ENCODE measurements at regions of chr4 and their contacts with region 1.

Region 1: GRCh38 chr4:140252742-140253555 is 99.0 kb upstream of the MAML3 start:
- DNase-seq: peak; percentile 89 to 94 (median 91)
- H3K4me3 ChIP-seq: peak overlapping the region in 2 of 3 donors; percentile 42 to 47
- H3K27ac ChIP-seq: peak overlapping the region; percentile 55 to 73
- H3K4me1 ChIP-seq: peaks cover 0 to 3% (median 0%) of the 10 kb centered on the region in 3 donors
- H3K27me3 ChIP-seq: no peaks in the 10 kb centered on the region
- CTCF ChIP-seq: peak; percentile 96

Region 2: GRCh38 chr4:139734875-139735380 is 518.0 kb before region 1 on chr4:
- intact Hi-C with region 1: loop called (anchors 10 kb)
- DNase-seq: peak; percentile 96 to 99 (median 98)
- H3K4me3 ChIP-seq: peak overlapping the region; percentile 72 to 77 (median 76)
- H3K27ac ChIP-seq: peak overlapping the region; percentile 23 to 53
- H3K4me1 ChIP-seq: peaks cover 2 to 7% (median 5%) of the 10 kb centered on the region in 3 donors
- H3K27me3 ChIP-seq: no peaks in the 10 kb centered on the region
- CTCF ChIP-seq: peak; percentile 89

Region 3: DNA sequence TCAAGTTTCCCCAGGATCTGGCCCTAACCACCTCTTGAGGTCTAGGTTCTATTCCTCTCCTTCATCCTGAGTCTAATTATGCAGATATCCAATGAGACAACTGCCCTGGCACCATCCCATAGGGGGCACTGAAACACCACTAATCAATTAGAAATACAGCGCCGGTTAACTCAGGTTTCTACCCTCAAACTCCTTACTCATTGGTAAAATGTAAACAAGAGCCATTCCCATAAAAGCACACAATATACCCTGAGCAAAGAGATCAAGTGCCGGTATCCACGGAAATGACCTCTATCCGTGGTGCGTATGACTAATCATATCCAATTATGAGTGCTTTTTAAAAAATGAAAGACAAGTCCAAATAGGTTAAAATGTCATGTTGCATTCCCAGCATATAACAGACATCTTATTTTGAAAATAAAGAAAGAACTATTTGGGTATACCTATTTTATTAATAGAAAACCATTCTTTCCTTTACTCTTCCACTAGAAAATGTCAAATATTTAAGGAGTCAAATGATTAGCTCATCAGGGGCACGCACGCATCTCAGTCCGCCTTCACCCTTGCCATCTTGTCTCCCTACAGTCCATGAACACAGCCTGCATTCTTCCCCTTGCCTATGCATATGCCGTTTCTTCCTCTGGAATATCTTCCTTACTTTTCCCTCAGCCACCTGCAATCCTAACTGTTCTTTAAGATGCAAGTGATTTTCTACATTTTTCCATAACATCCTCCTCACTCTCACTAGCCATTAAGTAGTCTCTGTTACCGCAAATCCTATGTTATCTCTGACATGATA is 240.1 kb before region 1 on chr4:
- intact Hi-C with region 1: loop called (anchors 5 kb)
- DNase-seq: peak in 4 of 5 donors; percentile 67 to 85 (median 74)
- H3K4me3 ChIP-seq: no peak overlapping the region
- H3K27ac ChIP-seq: no peak overlapping the region
- H3K4me1 ChIP-seq: peaks cover 0 to 2% (median 0%) of the 10 kb centered on the region in 3 donors
- H3K27me3 ChIP-seq: no peaks in the 10 kb centered on the region
- CTCF ChIP-seq: peak; percentile 51

Region 4: GRCh38 chr4:140156529-140157171 is 96.3 kb before region 1 on chr4:
- intact Hi-C with region 1: loop called (anchors 5 kb)
- DNase-seq: no peak
- H3K4me3 ChIP-seq: no peak overlapping the region
- H3K27ac ChIP-seq: no peak overlapping the region
- H3K4me1 ChIP-seq: peaks cover 0 to 3% (median 0%) of the 10 kb centered on the region in 3 donors
- H3K27me3 ChIP-seq: no peaks in the 10 kb centered on the region
- CTCF ChIP-seq: no peak

Region 5: DNA sequence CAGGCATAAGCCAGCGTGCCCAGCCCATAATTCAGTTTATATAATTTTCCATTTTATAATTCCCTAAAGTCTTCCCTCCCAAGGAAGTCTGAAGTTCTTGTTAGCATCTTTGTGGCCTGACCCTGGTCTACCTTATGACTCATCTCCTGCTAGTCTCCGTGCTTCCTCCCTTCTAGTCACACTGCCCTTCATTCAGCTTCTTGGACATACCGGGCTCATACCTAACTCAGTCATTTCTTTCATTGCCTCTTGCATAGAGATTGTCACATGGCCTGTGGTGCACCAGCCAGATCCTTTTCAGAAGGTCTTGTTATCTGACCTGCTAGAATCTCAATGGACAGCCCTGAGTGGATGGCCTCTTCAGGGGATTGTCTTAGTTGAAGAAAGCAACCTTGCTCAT is 76.2 kb before region 1 on chr4:
- intact Hi-C with region 1: no loop called
- DNase-seq: no peak
- H3K4me3 ChIP-seq: no peak overlapping the region
- H3K27ac ChIP-seq: no peak overlapping the region
- H3K4me1 ChIP-seq: no peaks in the 10 kb centered on the region
- H3K27me3 ChIP-seq: no peaks in the 10 kb centered on the region
- CTCF ChIP-seq: no peak

Measured in kidney (tissue), 22 donors.